Ascending aorta (tissue), 2 donors: ENCODE measurements at regions of chr13 and their contacts with region 1.

Region 1: GRCh38 chr13:34107829-34108228 is 289.9 kb downstream of the RFC3 start:
- DNase-seq: no peak
- H3K4me3 ChIP-seq: no peak overlapping the region
- H3K27ac ChIP-seq: no peak overlapping the region
- H3K4me1 ChIP-seq: no peaks in the 10 kb centered on the region
- H3K27me3 ChIP-seq: no peaks in the 10 kb centered on the region
- CTCF ChIP-seq: no peak

Region 2: GRCh38 chr13:34076943-34077703 is 30.7 kb before region 1 on chr13:
- intact Hi-C with region 1: no loop called
- DNase-seq: no peak
- H3K4me3 ChIP-seq: no peak overlapping the region
- H3K27ac ChIP-seq: no peak overlapping the region
- H3K4me1 ChIP-seq: peaks cover 0 to 7% of the 10 kb centered on the region in 2 donors
- H3K27me3 ChIP-seq: no peaks in the 10 kb centered on the region
- CTCF ChIP-seq: peak in 1 of 3 experiments; percentile 39

Region 3: GRCh38 chr13:34246516-34246915 is 138.7 kb after region 1 on chr13:
- intact Hi-C with region 1: loop called (anchors 10 kb)
- DNase-seq: no peak
- H3K4me3 ChIP-seq: no peak overlapping the region
- H3K27ac ChIP-seq: no peak overlapping the region
- H3K4me1 ChIP-seq: no peaks in the 10 kb centered on the region
- H3K27me3 ChIP-seq: no peaks in the 10 kb centered on the region
- CTCF ChIP-seq: no peak